Testis (tissue), 5 donors: ENCODE measurements at regions of chr21 and their contacts with region 1.

Region 1: DNA sequence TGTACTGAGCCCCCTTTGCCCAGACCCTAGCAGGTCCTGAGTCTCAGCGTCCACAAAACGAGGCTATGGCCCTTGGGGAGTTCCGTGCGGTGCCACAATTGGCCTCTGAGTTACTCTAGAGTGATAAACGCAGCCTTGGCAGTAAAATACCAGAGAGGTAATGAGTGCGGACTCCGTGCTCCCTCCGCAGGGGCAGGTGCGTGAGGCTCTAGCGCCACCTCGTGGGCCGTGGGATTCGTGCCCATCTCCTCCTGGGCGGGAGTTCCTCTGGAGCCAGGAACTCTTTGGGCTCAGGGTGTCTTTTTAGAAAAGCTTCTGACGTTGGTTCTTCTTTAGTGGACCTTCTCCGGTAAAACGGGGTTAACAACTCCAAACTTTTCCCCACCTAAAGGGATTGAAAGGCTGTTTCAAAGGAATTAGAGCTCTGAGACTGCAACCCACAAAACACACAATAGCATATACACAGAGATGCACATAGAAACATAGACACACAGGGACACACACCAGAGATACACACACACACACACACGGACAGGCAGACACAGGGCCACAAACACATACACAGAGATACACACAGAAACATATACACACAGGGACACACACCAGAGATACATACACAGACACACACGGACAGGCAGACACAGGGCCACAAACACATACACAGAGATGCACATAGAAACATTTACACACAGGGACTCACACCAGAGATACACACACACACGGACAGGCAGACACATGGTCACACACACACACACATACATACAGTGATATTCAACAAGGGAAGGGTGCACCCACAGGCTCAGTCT is 99.4 kb downstream of the KCNJ15 start:
- DNase-seq: peak; percentile 89
- H3K4me3 ChIP-seq: no peak overlapping the region
- H3K27ac ChIP-seq: no peak overlapping the region
- H3K4me1 ChIP-seq: peaks cover 3% of the 10 kb centered on the region
- H3K27me3 ChIP-seq: no peaks in the 10 kb centered on the region
- CTCF ChIP-seq: peak; percentile 87 to 96 (median 89)
- POLR2A ChIP-seq: no peak

Region 2: GRCh38 chr21:38165466-38166172 is 190.6 kb before region 1 on chr21:
- intact Hi-C with region 1: loop called (anchors 10 kb)
- DNase-seq: no peak
- H3K4me3 ChIP-seq: no peak overlapping the region
- H3K27ac ChIP-seq: no peak overlapping the region
- H3K4me1 ChIP-seq: peaks cover 7% of the 10 kb centered on the region
- H3K27me3 ChIP-seq: no peaks in the 10 kb centered on the region
- CTCF ChIP-seq: no peak
- POLR2A ChIP-seq: no peak

Region 3: DNA sequence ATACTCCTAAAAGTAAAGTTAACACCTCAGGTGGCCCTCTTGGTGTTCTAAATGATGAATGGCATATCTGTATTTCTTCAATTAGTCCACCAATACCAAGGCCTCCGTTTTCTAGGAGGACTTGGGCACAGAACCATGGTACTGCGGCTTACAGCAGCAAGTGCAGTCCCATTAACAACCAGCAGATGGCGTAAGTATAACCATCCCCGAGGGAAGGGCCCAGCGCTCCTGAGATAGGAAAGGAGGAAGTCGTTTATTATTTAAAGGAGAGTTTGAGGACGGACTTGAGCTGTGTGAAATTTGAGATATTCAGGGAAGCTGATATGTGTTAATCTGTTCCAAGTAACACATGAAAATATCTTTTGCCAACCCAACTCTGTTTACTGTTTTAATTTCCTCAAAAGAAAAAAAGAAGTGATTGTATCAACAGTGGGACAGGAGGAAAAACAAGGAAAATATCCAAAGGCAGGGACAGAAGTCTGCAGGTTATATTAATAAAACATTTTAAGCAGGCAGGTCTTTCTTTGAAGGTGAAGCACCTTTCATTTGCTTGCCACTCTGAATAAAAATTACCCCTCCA is 137.1 kb before region 1 on chr21:
- intact Hi-C with region 1: loop called (anchors 5 kb)
- DNase-seq: peak; percentile 87
- H3K4me3 ChIP-seq: no peak overlapping the region
- H3K27ac ChIP-seq: no peak overlapping the region
- H3K4me1 ChIP-seq: peaks cover 10% of the 10 kb centered on the region
- H3K27me3 ChIP-seq: no peaks in the 10 kb centered on the region
- CTCF ChIP-seq: peak; percentile 92 to 97 (median 95)
- POLR2A ChIP-seq: no peak